CD8-positive, alpha-beta T cell (primary cell): ENCODE measurements at regions of chr2 and their contacts with region 1.

Region 1: GRCh38 chr2:42810121-42810970 is 18.0 kb upstream of the HAAO start:
- DNase-seq: peak; percentile 94 to 99 (median 95)
- ATAC-seq: peak; percentile 78
- H3K4me3 ChIP-seq: peak overlapping the region; percentile 94 to 99
- H3K4me3 Mint-ChIP-seq: peak overlapping the region; percentile 98
- H3K27ac ChIP-seq: peak overlapping the region; percentile 94 to 96
- H3K27ac Mint-ChIP-seq: peak overlapping the region; percentile 97
- H3K4me1 ChIP-seq: peaks cover 7% of the 10 kb centered on the region
- H3K4me1 Mint-ChIP-seq: peaks cover 23% of the 10 kb centered on the region
- H3K27me3 ChIP-seq: no peaks in the 10 kb centered on the region
- H3K27me3 Mint-ChIP-seq: no peaks in the 10 kb centered on the region
- CTCF ChIP-seq: no peak

Region 2: DNA sequence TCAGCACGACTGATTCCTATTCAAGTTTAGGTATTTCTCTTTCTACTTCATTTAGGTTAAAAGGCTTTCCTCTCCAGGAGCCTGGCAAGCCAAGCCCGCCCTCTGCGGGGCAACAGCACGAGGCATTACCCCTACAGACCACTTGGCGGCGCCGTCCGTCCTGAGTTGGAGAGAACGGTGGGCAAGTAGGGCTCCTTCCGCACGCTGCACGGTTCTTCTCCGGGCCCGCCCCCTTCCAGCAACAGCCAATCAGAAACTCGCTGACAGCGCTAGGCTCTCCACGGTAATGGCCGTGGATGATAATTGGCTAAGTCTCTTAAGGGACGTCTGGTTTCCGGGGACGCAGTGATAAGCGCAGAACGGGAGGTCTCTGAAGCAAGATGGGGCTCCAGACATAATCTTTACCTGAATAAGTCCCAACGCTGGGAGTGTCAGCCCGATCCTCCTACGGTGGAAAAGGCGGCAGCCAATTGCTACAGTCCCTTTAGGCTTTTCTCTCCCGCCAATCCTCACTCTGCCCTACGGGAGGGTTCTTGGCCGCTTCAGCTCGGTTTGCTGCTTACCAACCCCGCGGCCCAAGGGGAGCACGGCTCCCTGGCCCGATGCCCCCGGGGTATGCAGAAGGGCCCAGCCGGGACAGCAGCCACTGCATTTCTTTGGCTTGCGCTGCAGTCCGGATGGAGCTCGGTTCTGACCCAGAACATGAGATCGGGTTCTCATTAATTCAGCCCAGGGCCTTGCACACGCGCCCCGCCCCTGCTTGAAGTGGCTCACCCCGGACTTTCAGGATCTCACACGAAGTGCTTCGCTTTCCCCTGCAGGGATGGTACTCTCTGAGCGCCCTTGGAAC is 969.4 kb before region 1 on chr2:
- CTCF ChIA-PET with region 1: no interaction called
- POLR2A ChIA-PET with region 1: interaction called, 3 read pairs
- intact Hi-C with region 1: loop called in 1 of 2 experiments (anchors 5 kb)
- DNase-seq: peak; percentile 94 to 98 (median 97)
- ATAC-seq: peak; percentile 97
- H3K4me3 ChIP-seq: peak overlapping the region; percentile 74 to 81
- H3K4me3 Mint-ChIP-seq: peak overlapping the region; percentile 95
- H3K27ac ChIP-seq: peak overlapping the region; percentile 77 to 82
- H3K27ac Mint-ChIP-seq: peak overlapping the region; percentile 96
- H3K4me1 ChIP-seq: peaks cover 11% of the 10 kb centered on the region
- H3K4me1 Mint-ChIP-seq: peaks cover 14% of the 10 kb centered on the region
- H3K27me3 ChIP-seq: peaks cover 0 to 1% of the 10 kb centered on the region in 2 experiments
- H3K27me3 Mint-ChIP-seq: peaks cover 17% of the 10 kb centered on the region
- CTCF ChIP-seq: peak; percentile 95

Region 3: GRCh38 chr2:42494355-42495233 is 315.8 kb before region 1 on chr2:
- CTCF ChIA-PET with region 1: no interaction called
- POLR2A ChIA-PET with region 1: interaction called, 7 read pairs
- intact Hi-C with region 1: loop called in 1 of 2 experiments (anchors 1 kb)
- DNase-seq: peak; percentile 51 to 84 (median 75)
- ATAC-seq: peak; percentile 43
- H3K4me3 ChIP-seq: peak overlapping the region; percentile 58 to 74
- H3K4me3 Mint-ChIP-seq: peak overlapping the region; percentile 93
- H3K27ac ChIP-seq: peak overlapping the region in 1 of 2 experiments; percentile 15
- H3K27ac Mint-ChIP-seq: peak overlapping the region; percentile 89
- H3K4me1 ChIP-seq: no peaks in the 10 kb centered on the region
- H3K4me1 Mint-ChIP-seq: peaks cover 32% of the 10 kb centered on the region
- H3K27me3 ChIP-seq: peaks cover 0 to 4% of the 10 kb centered on the region in 2 experiments
- H3K27me3 Mint-ChIP-seq: peaks cover 9% of the 10 kb centered on the region
- CTCF ChIP-seq: peak; percentile 92

Region 4: GRCh38 chr2:42663106-42663780 is 147.1 kb before region 1 on chr2:
- CTCF ChIA-PET with region 1: no interaction called
- POLR2A ChIA-PET with region 1: interaction called, 3 read pairs
- intact Hi-C with region 1: loop called in 1 of 2 experiments (anchors 10 kb)
- DNase-seq: peak; percentile 24 to 84 (median 60)
- ATAC-seq: peak; percentile 100
- H3K4me3 ChIP-seq: no peak overlapping the region
- H3K4me3 Mint-ChIP-seq: peak overlapping the region; percentile 32
- H3K27ac ChIP-seq: no peak overlapping the region
- H3K27ac Mint-ChIP-seq: peak overlapping the region; percentile 85
- H3K4me1 ChIP-seq: peaks cover 10% of the 10 kb centered on the region
- H3K4me1 Mint-ChIP-seq: peaks cover 25% of the 10 kb centered on the region
- H3K27me3 ChIP-seq: no peaks in the 10 kb centered on the region
- H3K27me3 Mint-ChIP-seq: no peaks in the 10 kb centered on the region
- CTCF ChIP-seq: peak; percentile 91

Region 5: GRCh38 chr2:42828487-42829425 is 18.4 kb after region 1 on chr2:
- CTCF ChIA-PET with region 1: interaction called, 14 read pairs
- POLR2A ChIA-PET with region 1: interaction called, 16 read pairs
- intact Hi-C with region 1: loop called in 1 of 2 experiments (anchors 1 kb)
- DNase-seq: peak; percentile 34 to 84 (median 70)
- ATAC-seq: peak; percentile 97
- H3K4me3 ChIP-seq: no peak overlapping the region
- H3K4me3 Mint-ChIP-seq: no peak overlapping the region
- H3K27ac ChIP-seq: no peak overlapping the region
- H3K27ac Mint-ChIP-seq: no peak overlapping the region
- H3K4me1 ChIP-seq: peaks cover 9% of the 10 kb centered on the region
- H3K4me1 Mint-ChIP-seq: peaks cover 17% of the 10 kb centered on the region
- H3K27me3 ChIP-seq: peaks cover 0 to 2% of the 10 kb centered on the region in 2 experiments
- H3K27me3 Mint-ChIP-seq: peaks cover 1% of the 10 kb centered on the region
- CTCF ChIP-seq: peak; percentile 88

Region 6: DNA sequence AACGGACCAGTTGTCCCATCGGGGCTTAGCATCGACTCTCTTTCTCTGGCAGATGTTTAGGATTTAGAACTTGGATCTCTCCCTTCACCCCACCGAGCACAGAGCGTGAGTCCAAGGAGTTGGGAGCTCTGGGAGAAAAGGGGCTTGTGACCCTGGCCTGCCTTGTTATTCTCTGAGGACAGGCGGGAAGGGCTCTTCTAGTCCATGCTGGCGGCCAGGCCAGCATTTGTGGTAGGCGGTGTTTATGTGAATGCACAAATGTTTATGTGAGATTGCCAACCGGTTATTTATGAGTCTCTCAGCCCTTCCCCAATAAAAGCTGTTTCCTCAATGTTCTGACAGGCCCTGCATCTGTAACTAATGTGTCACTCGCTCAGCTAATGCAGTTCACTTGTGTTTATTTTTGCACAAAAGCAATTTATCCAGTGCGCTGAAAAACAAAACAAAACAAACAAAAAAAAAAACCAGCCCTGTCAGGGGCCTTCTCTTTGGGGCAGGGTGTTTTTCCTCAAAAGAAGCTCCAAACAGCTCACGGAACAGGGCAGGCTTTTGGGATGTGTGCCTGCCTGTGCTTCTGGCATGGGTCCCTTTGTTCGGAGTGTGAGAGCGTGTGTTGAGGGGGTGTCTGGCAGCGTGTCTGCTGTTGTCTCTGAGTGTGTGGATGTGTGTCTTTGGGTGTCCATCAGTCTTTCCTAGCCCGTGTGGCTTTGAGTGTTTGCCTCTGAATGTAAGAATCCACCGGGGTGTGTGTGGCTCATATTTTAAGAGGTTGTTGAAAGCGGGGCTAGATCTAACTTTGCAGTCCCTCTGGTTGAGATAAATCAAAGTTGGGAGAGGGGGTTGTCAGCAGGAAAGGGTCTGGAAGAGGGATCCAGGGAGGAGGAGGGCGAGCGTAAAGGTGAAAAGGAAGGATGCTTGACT is 34.8 kb after region 1 on chr2:
- CTCF ChIA-PET with region 1: no interaction called
- POLR2A ChIA-PET with region 1: no interaction called
- intact Hi-C with region 1: no loop called
- DNase-seq: no peak
- ATAC-seq: no peak
- H3K4me3 ChIP-seq: no peak overlapping the region
- H3K4me3 Mint-ChIP-seq: no peak overlapping the region
- H3K27ac ChIP-seq: no peak overlapping the region
- H3K27ac Mint-ChIP-seq: no peak overlapping the region
- H3K4me1 ChIP-seq: no peaks in the 10 kb centered on the region
- H3K4me1 Mint-ChIP-seq: no peaks in the 10 kb centered on the region
- H3K27me3 ChIP-seq: no peaks in the 10 kb centered on the region
- H3K27me3 Mint-ChIP-seq: no peaks in the 10 kb centered on the region
- CTCF ChIP-seq: no peak

Region 7: GRCh38 chr2:43426305-43427031 is 616.1 kb after region 1 on chr2:
- CTCF ChIA-PET with region 1: no interaction called
- POLR2A ChIA-PET with region 1: no interaction called
- intact Hi-C with region 1: loop called in 1 of 2 experiments (anchors 5 kb)
- DNase-seq: peak; percentile 9 to 77 (median 66)
- ATAC-seq: peak; percentile 95
- H3K4me3 ChIP-seq: no peak overlapping the region
- H3K4me3 Mint-ChIP-seq: no peak overlapping the region
- H3K27ac ChIP-seq: peak overlapping the region; percentile 27 to 75
- H3K27ac Mint-ChIP-seq: peak overlapping the region; percentile 76
- H3K4me1 ChIP-seq: peaks cover 31% of the 10 kb centered on the region
- H3K4me1 Mint-ChIP-seq: peaks cover 40% of the 10 kb centered on the region
- H3K27me3 ChIP-seq: no peaks in the 10 kb centered on the region
- H3K27me3 Mint-ChIP-seq: no peaks in the 10 kb centered on the region
- CTCF ChIP-seq: no peak

Region 8: DNA sequence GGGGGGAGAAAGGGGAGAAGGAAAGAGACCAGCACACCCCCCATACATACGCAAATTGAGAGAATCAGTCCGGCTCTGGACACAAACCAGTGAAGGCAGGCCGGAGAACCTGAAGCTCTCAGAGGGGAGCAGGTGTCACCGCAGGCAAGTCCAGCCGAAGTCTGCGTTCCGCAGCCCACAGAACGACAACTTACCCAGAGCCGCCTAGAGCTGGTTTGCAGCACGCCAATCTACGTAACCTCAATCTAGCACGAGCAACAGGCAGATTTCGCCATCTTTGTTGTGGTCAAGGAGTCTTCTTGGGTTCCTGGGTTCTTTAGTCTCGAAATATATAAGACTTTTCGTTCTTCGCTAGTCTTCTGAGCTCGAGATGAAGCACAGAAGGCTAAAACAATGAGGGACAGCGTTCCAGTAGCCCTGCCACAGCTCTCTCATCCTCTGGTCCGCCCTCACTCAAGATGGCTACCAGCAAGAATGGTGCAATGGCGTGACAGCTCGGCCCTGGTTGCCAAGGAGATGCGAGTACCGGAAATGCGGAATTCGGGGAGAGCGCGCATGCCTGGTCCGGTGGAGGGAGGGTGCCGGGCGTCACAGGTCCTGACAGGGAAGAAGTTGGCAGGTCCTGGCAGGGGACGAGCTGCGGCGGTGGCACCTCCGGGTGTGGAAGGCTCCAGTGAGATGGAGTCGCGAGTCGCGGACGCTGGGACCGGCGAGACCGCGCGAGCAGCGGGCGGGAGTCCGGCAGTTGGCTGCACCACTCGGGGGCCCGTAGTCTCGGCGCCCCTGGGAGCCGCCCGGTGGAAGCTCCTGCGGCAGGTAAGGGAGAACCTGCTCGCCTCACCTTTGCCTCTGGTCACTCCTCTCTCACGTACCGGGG is 1551.2 kb after region 1 on chr2 and contains the starts of genes CAMKMT and PREPL:
- CTCF ChIA-PET with region 1: no interaction called
- POLR2A ChIA-PET with region 1: no interaction called
- intact Hi-C with region 1: loop called in 1 of 2 experiments (anchors 2 kb)
- DNase-seq: peak; percentile 97 to 99 (median 98)
- ATAC-seq: peak; percentile 88
- H3K4me3 ChIP-seq: peak within 1 kb of the TSS; percentile 74 to 81
- H3K4me3 Mint-ChIP-seq: peak within 1 kb of the TSS; percentile 98
- H3K27ac ChIP-seq: peak within 1 kb of the TSS; percentile 93 to 98
- H3K27ac Mint-ChIP-seq: peak within 1 kb of the TSS; percentile 100
- H3K4me1 ChIP-seq: peaks cover 24% of the 10 kb centered on the region
- H3K4me1 Mint-ChIP-seq: peaks cover 61% of the 10 kb centered on the region
- H3K27me3 ChIP-seq: no peaks in the 10 kb centered on the region
- H3K27me3 Mint-ChIP-seq: no peaks in the 10 kb centered on the region
- CTCF ChIP-seq: no peak
- total RNA-seq, gene CAMKMT: 12.4 to 13.0 TPM
- total RNA-seq, gene PREPL: 26.6 to 27.9 TPM